ENCODE measurements at regions of chr4 and their contacts with region 1.

Region 1: DNA sequence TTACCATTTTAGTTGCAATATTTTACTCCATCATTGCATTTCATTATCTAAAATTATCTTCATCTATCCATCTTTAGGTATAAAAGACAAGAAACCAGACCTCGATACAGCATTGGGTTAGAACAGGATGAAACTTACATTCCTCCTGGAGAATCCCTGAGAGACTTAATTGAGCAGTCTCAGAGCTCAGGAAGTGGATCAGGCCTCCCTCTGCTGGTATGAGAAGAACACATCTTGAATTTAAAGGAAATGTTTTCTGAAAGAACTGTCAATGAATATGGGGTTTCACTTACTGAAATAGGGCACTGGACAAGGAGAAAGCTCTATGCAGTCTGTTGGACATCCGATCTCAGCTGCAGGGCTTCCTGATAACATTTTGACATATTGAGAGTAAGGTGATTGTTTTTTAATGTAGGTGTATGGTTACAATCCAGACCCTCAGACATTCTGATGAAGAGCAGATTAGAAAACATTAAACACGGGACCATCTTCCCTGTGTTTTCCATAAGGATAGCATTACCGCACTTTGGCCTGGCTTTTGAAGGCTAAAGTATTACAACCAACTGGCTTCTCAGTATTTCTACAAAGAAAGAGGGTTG is 367.2 kb downstream of the BMPR1B start:
- DNase-seq: peak; percentile 45 to 81
- ATAC-seq: peak; percentile 82 to 85; a peak in 5 of 6 replicates
- H3K4me3 ChIP-seq: no peak overlapping the region
- H3K27ac ChIP-seq: peak overlapping the region; percentile 12 to 71; a peak in 5 of 6 replicates
- H3K4me1 ChIP-seq: peaks cover 47% of the 10 kb centered on the region
- CTCF ChIP-seq: peak; percentile 71
- EP300 ChIP-seq: no peak
- POLR2A ChIP-seq: no peak
- RAD21 ChIP-seq: peak; percentile 77 to 80

Region 2: DNA sequence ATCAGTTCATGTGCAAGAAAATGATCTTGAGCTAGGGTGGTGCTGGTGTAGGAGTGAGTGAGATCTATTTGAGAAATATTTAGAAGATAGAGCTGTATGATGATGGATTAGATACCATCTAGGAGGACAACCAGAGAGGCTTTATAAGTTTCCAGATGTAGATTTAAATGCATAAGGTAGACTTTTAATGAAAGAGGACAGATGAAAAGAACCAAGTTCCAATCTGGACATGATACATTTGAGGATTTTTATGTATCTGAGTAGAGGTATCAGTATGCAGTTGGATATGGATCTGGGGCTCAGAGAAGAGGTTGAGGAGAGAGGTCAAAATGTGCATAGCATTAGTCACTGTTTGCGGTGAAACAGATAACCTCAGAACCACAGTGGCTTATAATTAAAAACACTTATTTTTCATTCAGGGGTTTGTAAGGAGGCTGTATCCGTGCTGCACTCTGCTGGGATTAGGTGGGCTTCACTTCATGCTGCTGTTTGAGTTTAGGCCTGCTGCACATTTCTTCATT is 18.5 kb before region 1 on chr4:
- CTCF ChIA-PET with region 1: interaction called, 10 read pairs
- POLR2A ChIA-PET with region 1: no interaction called
- DNase-seq: no peak
- ATAC-seq: peak in 1 of 2 experiments; percentile 74; a peak in 4 of 6 replicates
- H3K4me3 ChIP-seq: no peak overlapping the region
- H3K27ac ChIP-seq: peak overlapping the region; percentile 74 to 88
- H3K4me1 ChIP-seq: peaks cover 81% of the 10 kb centered on the region
- CTCF ChIP-seq: no peak
- EP300 ChIP-seq: no peak
- POLR2A ChIP-seq: no peak
- RAD21 ChIP-seq: no peak

Measured in A549 (cell line).